ENCODE measurements at regions of chr18 and their contacts with region 1.

Region 1: GRCh38 chr18:2027026-2027425 is 544.3 kb downstream of the METTL4 start:
- DNase-seq: no peak
- ATAC-seq: no peak
- H3K4me3 Mint-ChIP-seq: no peak overlapping the region
- H3K27ac Mint-ChIP-seq: no peak overlapping the region
- H3K4me1 Mint-ChIP-seq: no peaks in the 10 kb centered on the region
- H3K27me3 Mint-ChIP-seq: no peaks in the 10 kb centered on the region
- CTCF ChIP-seq: no peak

Region 2: DNA sequence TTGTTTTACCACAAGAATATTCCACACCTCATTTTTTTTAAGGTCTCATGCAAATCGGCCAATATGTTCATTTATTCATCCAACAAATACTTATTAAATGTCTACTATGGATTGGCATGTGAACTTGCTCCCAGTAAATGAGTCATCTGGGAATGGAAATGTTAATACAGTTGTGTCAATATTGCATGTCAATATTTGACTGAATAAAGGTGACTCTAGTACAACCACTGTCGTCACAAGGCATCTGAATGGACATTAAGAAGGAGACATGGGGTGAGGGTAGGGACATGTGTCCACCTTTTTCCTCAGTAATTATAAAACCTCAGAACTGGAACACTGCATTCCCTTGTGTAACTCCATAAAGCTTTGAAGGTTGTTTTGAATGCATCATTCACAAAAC is 756.9 kb before region 1 on chr18:
- CTCF ChIA-PET with region 1: no interaction called
- POLR2A ChIA-PET with region 1: no interaction called
- intact Hi-C with region 1: no loop called
- DNase-seq: no peak
- ATAC-seq: no peak
- H3K4me3 Mint-ChIP-seq: no peak overlapping the region
- H3K27ac Mint-ChIP-seq: no peak overlapping the region
- H3K4me1 Mint-ChIP-seq: no peaks in the 10 kb centered on the region
- H3K27me3 Mint-ChIP-seq: no peaks in the 10 kb centered on the region
- CTCF ChIP-seq: no peak

Region 3: GRCh38 chr18:2002151-2002550 is 24.9 kb before region 1 on chr18:
- CTCF ChIA-PET with region 1: no interaction called
- POLR2A ChIA-PET with region 1: no interaction called
- intact Hi-C with region 1: loop called (anchors 1 kb)
- DNase-seq: no peak
- ATAC-seq: no peak
- H3K4me3 Mint-ChIP-seq: no peak overlapping the region
- H3K27ac Mint-ChIP-seq: no peak overlapping the region
- H3K4me1 Mint-ChIP-seq: no peaks in the 10 kb centered on the region
- H3K27me3 Mint-ChIP-seq: no peaks in the 10 kb centered on the region
- CTCF ChIP-seq: no peak

Measured in activated B cell treated with CpG ODN at 0.5 μM for 24 hours (primary cell).